IMR-90 (cell line): ENCODE measurements at regions of chr20 and their contacts with region 1.

Region 1: DNA sequence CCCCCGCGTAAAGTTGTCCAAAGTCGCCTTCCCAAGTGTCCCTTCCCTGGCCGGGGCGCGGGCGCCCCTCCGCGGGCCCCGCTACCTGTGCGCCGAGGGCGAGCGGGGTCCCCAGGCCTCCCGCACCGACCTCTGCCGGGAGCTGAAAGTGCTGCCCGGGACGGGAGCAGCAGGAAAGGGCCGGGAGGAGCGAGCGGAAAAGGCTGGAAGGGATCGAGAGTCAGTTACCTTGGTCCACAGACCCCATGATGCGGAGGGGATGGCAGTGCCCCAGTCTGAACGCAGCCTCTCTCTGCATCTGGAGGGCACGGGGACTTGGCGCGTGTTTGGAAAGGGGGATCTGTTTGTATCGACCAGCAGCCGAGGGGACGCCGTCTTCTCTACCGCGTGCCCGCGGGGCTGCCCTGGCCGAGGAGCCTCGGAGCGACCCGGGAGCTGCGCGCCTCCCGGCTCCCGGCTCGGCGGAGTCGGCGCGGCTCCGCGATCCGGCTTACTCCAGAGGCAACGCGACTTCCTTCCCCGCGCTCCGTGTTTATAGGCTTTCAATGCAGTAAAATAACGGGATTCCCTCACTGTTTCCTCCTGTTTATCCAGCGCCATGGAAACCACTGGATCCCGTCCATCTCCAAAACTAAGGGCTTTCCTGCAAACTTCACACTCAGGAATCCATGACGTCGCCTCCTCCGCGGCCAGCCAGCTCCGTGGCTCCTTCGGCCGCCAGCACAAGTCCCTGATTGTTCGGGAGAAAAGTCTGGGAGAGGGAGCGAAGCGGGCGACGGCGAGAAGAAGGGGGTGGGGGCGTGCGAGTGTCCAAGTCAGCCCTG is 20.0 kb upstream of the NFATC2 start:
- DNase-seq: peak; percentile 95
- ATAC-seq: peak; percentile 74
- H3K4me3 ChIP-seq: peak overlapping the region; percentile 54
- H3K27ac ChIP-seq: peak overlapping the region; percentile 21; the same call in 1 of the 2 replicates
- H3K4me1 ChIP-seq: peaks cover 12% of the 10 kb centered on the region
- H3K27me3 ChIP-seq: no peaks in the 10 kb centered on the region
- CTCF ChIP-seq: peak; percentile 16; the same call in 1 of the 2 replicates
- POLR2A ChIP-seq: peak; percentile 97
- RAD21 ChIP-seq: peak; percentile 7; the same call in 1 of the 2 replicates

Region 2: DNA sequence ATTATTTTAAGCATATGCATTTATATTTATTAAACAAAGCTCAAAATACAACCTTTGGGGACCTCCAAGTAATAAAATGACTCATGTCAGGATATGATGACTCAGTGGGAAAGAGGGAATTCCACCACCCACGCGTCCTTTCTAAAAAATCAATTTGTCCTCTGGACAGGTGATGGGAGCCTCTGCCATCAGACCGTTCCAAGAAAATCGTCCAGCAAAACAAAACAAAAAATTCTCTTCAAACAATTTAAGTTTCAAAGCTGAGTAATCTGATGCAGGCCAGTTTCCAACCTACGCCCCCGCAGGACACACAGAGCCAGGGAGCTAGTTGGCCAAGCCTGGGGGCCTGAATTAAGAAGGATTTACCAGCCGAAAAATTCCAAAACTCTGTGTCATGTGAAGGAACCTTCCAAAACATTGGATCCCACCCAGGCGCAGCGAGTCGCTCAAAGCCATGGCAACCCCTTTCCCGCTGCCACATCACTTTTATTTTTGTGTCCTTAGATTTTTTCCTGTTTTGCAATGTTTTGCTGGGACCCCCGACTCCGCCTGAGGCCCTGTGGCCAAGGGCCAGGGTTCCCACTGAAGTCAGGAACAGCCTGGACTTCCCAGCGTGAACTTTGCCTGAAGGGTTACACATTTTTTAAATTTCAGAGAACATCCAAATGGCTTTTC is 115.3 kb before region 1 on chr20:
- CTCF ChIA-PET with region 1: no interaction called
- POLR2A ChIA-PET with region 1: no interaction called
- dilution Hi-C with region 1: no loop called
- in situ Hi-C with region 1: no loop called
- intact Hi-C with region 1: loop called (anchors 2 kb)
- DNase-seq: peak; percentile 98
- ATAC-seq: peak; percentile 88
- H3K4me3 ChIP-seq: no peak overlapping the region
- H3K27ac ChIP-seq: peak overlapping the region; percentile 18
- H3K4me1 ChIP-seq: peaks cover 12% of the 10 kb centered on the region
- H3K27me3 ChIP-seq: no peaks in the 10 kb centered on the region
- CTCF ChIP-seq: no peak
- POLR2A ChIP-seq: no peak
- RAD21 ChIP-seq: peak; percentile 9; the same call in 1 of the 2 replicates

Region 3: GRCh38 chr20:51487565-51488268 is 74.8 kb before region 1 on chr20:
- CTCF ChIA-PET with region 1: no interaction called
- POLR2A ChIA-PET with region 1: no interaction called
- dilution Hi-C with region 1: no loop called
- in situ Hi-C with region 1: no loop called
- intact Hi-C with region 1: loop called (anchors 5 kb)
- DNase-seq: peak; percentile 95
- ATAC-seq: peak; percentile 96
- H3K4me3 ChIP-seq: peak overlapping the region; percentile 5; the same call in 1 of the 2 replicates
- H3K27ac ChIP-seq: 0 out of 2 replicates have a peak overlapping the region, but pooled peaks have one; percentile 7
- H3K4me1 ChIP-seq: peaks cover 10% of the 10 kb centered on the region
- H3K27me3 ChIP-seq: no peaks in the 10 kb centered on the region
- CTCF ChIP-seq: no peak
- POLR2A ChIP-seq: peak; percentile 49; the same call in 1 of the 2 replicates
- RAD21 ChIP-seq: peak; percentile 32

Region 4: DNA sequence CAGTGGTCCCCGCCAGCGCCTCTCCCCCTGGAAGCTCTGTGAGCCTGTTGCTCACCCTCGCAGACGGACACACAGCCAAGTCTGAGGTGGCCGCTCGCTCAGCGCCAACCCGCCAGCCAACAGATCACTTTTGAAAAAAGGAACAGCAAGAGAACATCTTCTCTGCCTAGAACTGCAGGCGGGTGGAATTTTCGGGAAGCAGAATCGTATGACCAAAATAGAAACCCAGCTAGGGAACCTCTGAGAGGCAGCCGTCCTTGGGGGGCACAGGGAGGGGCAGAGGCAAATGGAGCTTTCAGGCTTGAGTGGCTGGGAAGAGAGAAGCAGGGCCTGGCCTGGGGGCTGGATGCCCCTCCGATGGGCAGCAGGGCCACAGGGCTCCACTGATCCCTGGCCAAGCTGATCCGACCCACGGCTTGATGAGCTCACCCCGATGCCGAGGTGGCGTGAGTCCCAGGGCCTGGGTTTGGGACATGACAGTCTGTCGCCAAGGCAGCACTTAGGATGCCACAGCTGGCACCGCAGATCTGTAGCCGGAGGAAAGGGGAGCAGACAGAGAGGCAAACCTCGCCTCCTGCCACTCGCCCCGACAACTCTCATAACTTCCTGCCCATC is 29.9 kb before region 1 on chr20:
- CTCF ChIA-PET with region 1: interaction called, 3 read pairs
- POLR2A ChIA-PET with region 1: no interaction called
- dilution Hi-C with region 1: no loop called
- in situ Hi-C with region 1: no loop called
- intact Hi-C with region 1: loop called (anchors 1 kb)
- DNase-seq: peak; percentile 45
- ATAC-seq: no peak
- H3K4me3 ChIP-seq: no peak overlapping the region
- H3K27ac ChIP-seq: peak overlapping the region; percentile 1; the same call in 1 of the 2 replicates
- H3K4me1 ChIP-seq: peaks cover 21% of the 10 kb centered on the region
- H3K27me3 ChIP-seq: no peaks in the 10 kb centered on the region
- CTCF ChIP-seq: no peak
- POLR2A ChIP-seq: no peak
- RAD21 ChIP-seq: no peak